Adrenal gland (tissue), 19 donors: ENCODE measurements at regions of chr6 and their contacts with region 1.

Region 1: GRCh38 chr6:108848116-108848868 is at the start of gene ARMC2:
- DNase-seq: peak; percentile 92 to 96 (median 93)
- H3K4me3 ChIP-seq: peak within 1 kb of the TSS; percentile 39 to 97 (median 53)
- H3K27ac ChIP-seq: peak within 1 kb of the TSS in 4 of 5 donors; percentile 54 to 92 (median 74)
- H3K4me1 ChIP-seq: peaks cover 18 to 25% of the 10 kb centered on the region in 2 donors
- H3K27me3 ChIP-seq: no peaks in the 10 kb centered on the region
- CTCF ChIP-seq: no peak
- POLR2A ChIP-seq: peak in 1 of 2 donors; percentile 59
- total RNA-seq, gene ARMC2: 2.1 to 7.8 (median 6.6) TPM

Region 2: GRCh38 chr6:108798670-108799353 is 49.5 kb before region 1 on chr6:
- intact Hi-C with region 1: no loop called
- DNase-seq: peak in 4 of 7 donors; percentile 29 to 78 (median 52)
- H3K4me3 ChIP-seq: no peak overlapping the region
- H3K27ac ChIP-seq: peak overlapping the region in 1 of 5 donors; percentile 56
- H3K4me1 ChIP-seq: peaks cover 0 to 20% of the 10 kb centered on the region in 2 donors
- H3K27me3 ChIP-seq: no peaks in the 10 kb centered on the region
- CTCF ChIP-seq: no peak
- POLR2A ChIP-seq: no peak

Region 3: GRCh38 chr6:108872141-108872557 is 23.9 kb after region 1 on chr6:
- intact Hi-C with region 1: loop called in 1 of 2 experiments (anchors 2 kb)
- DNase-seq: no peak
- H3K4me3 ChIP-seq: no peak overlapping the region
- H3K27ac ChIP-seq: peak overlapping the region in 1 of 5 donors; percentile 40
- H3K4me1 ChIP-seq: peaks cover 10 to 27% of the 10 kb centered on the region in 2 donors
- H3K27me3 ChIP-seq: no peaks in the 10 kb centered on the region
- CTCF ChIP-seq: no peak
- POLR2A ChIP-seq: no peak

Region 4: DNA sequence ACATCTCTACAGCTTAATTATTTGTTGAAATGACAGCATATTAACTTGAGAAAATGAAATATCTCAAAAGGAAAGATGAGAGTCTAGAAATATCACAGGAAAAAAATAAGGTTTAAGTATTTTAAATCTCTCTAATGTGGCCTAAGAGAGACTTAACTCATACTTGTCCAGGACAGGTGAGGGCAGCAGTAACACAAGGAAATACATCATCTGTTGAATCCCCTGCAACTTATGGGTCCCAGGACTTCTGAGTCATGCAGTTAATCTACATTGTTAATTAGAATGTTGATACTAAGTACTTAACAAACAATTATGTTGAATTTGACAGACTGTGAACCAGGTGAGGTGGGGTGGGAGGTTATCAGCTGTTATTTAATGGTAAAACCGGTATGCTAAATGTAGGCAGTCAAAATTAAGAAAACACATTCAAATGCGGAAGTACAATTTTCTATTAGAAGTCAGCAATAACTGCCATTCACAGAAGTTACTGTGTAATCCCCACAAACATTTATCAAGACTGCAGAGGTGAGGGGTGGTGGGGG is 334.9 kb after region 1 on chr6:
- intact Hi-C with region 1: no loop called
- DNase-seq: no peak
- H3K4me3 ChIP-seq: no peak overlapping the region
- H3K27ac ChIP-seq: no peak overlapping the region
- H3K4me1 ChIP-seq: peaks cover 0 to 5% of the 10 kb centered on the region in 2 donors
- H3K27me3 ChIP-seq: peaks cover 7% of the 10 kb centered on the region
- CTCF ChIP-seq: no peak
- POLR2A ChIP-seq: no peak